Activated CD4-positive, alpha-beta T cell treated with anti-CD3 and anti-CD28 coated beads for 36 hours (primary cell): ENCODE measurements at regions of chr4 and their contacts with region 1.

Region 1: GRCh38 chr4:170138580-170139194 is 48.9 kb upstream of the AADAT start:
- DNase-seq: peak; percentile 84
- ATAC-seq: peak; percentile 70
- H3K4me3 Mint-ChIP-seq: no peak overlapping the region
- H3K27ac Mint-ChIP-seq: no peak overlapping the region
- H3K4me1 Mint-ChIP-seq: peaks cover 2% of the 10 kb centered on the region
- H3K27me3 Mint-ChIP-seq: peaks cover 5% of the 10 kb centered on the region

Region 2: GRCh38 chr4:170259631-170260153 is 121.0 kb after region 1 on chr4:
- CTCF ChIA-PET with region 1: interaction called, 3 read pairs
- POLR2A ChIA-PET with region 1: no interaction called
- intact Hi-C with region 1: loop called (anchors 1 to 2 kb)
- DNase-seq: peak; percentile 77
- ATAC-seq: peak; percentile 83
- H3K4me3 Mint-ChIP-seq: no peak overlapping the region
- H3K27ac Mint-ChIP-seq: no peak overlapping the region
- H3K4me1 Mint-ChIP-seq: no peaks in the 10 kb centered on the region
- H3K27me3 Mint-ChIP-seq: no peaks in the 10 kb centered on the region

Region 3: GRCh38 chr4:170374770-170375169 is 236.1 kb after region 1 on chr4:
- CTCF ChIA-PET with region 1: no interaction called
- POLR2A ChIA-PET with region 1: no interaction called
- intact Hi-C with region 1: loop called (anchors 1 to 10 kb)
- DNase-seq: peak; percentile 23
- ATAC-seq: peak; percentile 33
- H3K4me3 Mint-ChIP-seq: no peak overlapping the region
- H3K27ac Mint-ChIP-seq: no peak overlapping the region
- H3K4me1 Mint-ChIP-seq: no peaks in the 10 kb centered on the region
- H3K27me3 Mint-ChIP-seq: no peaks in the 10 kb centered on the region

Region 4: DNA sequence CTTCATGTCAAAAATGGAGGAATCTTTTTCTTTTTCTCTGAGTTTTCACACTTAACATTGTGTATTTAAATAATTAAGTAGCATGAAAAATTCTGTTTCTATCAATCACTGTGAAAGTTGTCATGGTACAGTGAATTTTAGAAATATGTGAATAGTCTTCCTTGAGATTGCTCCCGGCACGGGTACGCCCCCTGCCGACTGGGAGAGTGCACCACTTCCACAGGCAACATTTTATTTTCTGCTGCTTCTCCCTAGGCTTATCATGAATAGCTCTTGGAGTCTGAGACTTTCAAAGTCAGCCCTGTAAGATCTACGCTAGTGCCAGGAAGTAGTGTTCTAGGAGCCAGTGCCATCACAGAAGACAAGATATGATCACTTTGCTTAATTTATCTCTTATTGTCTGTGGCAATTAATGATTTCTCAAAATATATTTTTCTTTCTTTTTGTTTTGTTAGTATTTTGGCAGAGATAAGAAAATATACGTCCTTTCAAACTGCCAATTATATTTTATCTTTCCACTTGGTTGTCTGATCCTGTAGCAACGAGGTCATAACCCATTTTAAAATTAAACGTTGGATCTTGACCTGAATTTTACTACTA is 714.8 kb after region 1 on chr4:
- CTCF ChIA-PET with region 1: no interaction called
- POLR2A ChIA-PET with region 1: no interaction called
- intact Hi-C with region 1: loop called (anchors 1 to 2 kb)
- DNase-seq: peak; percentile 54
- ATAC-seq: no peak
- H3K4me3 Mint-ChIP-seq: no peak overlapping the region
- H3K27ac Mint-ChIP-seq: no peak overlapping the region
- H3K4me1 Mint-ChIP-seq: no peaks in the 10 kb centered on the region
- H3K27me3 Mint-ChIP-seq: no peaks in the 10 kb centered on the region